HCT116 (cell line): ENCODE measurements at regions of chr4 and their contacts with region 1.

Region 1: DNA sequence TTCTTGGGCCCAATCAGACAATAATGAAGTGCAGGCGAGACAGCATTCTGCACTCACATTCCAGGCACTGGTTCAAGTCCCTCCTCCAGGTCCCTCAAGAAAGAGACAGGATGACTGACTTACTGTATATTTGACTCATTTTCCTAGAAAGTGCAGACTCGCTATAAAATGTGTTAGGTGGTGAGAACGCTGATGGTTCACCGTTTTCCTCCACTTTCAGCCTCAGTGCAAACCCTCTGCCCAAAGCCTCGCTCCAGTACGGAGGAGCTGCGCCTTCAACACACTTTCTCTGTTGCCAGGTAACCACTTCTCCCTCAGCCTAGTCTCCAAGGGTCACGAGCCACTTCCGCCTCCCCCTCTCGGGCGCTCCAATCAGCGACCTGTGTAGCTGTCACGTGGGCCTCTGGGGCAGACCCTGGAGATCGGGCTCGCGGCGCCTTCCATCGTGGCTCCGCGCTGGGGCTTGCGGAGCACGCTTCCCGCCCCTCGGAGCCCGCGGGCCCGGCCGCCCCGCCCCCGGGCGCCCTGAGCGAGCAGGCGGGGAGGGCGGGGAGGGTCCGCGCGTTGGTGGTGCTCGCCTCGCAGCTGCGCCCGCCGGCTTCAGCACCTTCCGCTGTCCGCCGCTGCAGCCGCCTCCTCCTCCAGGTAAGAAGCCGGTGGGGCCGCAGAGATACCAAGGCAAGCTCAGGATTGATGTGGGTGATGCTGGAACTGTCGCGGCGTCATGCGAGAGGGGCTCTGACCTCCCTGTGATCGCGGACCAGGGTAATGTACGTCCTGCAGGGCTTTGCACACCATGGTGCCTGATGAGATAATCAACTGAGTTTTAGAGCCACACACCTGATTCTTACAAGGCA is at the start of gene WDR17:
- DNase-seq: no peak
- ATAC-seq: no peak
- H3K4me3 ChIP-seq: no peak within 1 kb of the TSS
- H3K27ac ChIP-seq: no peak within 1 kb of the TSS
- H3K4me1 ChIP-seq: no peaks in the 10 kb centered on the region
- H3K27me3 ChIP-seq: no peaks in the 10 kb centered on the region
- CTCF ChIP-seq: no peak
- POLR2A ChIP-seq: no peak
- RAD21 ChIP-seq: no peak
- total RNA-seq, gene WDR17: 0.20 TPM

Region 2: DNA sequence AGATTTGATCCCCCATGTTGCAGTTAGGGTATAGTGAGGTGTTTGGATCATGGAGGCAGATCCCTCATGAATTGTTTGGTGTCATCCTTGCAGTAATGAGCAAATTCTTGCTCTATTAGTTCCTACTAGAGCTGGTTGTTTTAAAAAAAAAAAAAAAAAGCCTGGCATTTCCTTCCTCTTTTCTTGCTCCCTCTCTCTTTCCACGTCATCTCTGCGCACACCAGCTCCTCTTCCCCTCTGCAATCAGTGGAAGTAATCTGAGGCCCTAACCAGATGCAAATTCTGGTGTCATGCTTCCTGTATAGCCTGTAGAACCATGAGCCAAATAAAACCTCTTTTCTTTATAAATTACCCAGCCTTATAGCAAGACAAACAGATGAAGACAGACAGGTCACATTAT is 24.5 kb after region 1 on chr4:
- CTCF ChIA-PET with region 1: interaction called, 3 read pairs
- POLR2A ChIA-PET with region 1: no interaction called
- RAD21 ChIA-PET with region 1: no interaction called
- intact Hi-C with region 1: loop called (anchors 2 kb)
- DNase-seq: no peak
- ATAC-seq: no peak
- H3K4me3 ChIP-seq: no peak overlapping the region
- H3K27ac ChIP-seq: no peak overlapping the region
- H3K4me1 ChIP-seq: no peaks in the 10 kb centered on the region
- H3K27me3 ChIP-seq: no peaks in the 10 kb centered on the region
- CTCF ChIP-seq: no peak
- POLR2A ChIP-seq: no peak
- RAD21 ChIP-seq: no peak